Activated CD4-positive, alpha-beta T cell treated with anti-CD3 and anti-CD28 coated beads, Interleukin-2, amount 10 ng/mL, durations not matched to agents 24 days and 14 days (primary cell): ENCODE measurements at regions of chr22 and their contacts with region 1.

Region 1: DNA sequence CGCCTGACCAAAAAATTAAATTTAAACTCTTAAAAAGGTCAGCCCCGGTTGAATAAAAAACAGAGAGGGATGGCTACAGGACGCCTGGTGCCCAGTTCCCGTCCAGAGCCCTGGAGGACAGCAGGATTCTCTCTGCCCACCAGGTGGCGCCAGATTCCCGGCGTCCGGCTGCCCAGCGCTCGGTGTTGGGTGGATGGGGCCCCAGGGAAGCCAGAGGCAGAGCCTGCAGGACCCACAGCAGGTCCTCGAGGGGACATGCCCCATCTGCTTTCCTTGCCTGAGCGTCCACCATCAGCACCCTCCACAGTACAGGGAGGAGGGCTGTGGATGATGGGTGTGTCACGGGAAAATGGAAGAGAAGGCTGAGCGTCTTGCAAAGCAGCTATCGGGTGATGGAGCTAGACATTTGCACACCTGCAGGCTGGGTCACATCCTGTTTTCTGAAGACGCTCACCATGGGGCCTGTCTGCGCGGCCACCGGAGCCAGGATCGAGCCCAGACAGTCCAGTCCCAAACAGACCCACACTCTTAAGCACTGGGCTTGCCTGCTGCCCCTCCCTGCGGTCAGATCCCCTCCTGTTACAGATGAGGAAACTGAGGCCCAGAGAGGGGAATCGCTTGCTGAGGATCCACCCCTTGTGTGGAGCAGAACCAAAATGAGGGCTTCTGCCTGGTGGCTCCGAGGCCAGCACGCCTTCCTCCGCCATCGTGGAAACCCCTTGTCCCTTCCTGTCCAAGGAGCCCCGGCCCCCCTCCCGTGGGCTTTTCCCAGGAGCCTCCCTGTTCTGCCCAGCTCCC is 18.5 kb upstream of the CBX7 start:
- DNase-seq: peak; percentile 96
- H3K4me3 Mint-ChIP-seq: peak overlapping the region; percentile 70
- H3K27ac Mint-ChIP-seq: peak overlapping the region; percentile 72
- H3K4me1 Mint-ChIP-seq: peaks cover 34% of the 10 kb centered on the region
- H3K27me3 Mint-ChIP-seq: peaks cover 9% of the 10 kb centered on the region

Region 2: GRCh38 chr22:39306581-39307361 is 135.7 kb after region 1 on chr22:
- intact Hi-C with region 1: loop called (anchors 1 kb)
- DNase-seq: peak; percentile 86
- H3K4me3 Mint-ChIP-seq: no peak overlapping the region
- H3K27ac Mint-ChIP-seq: no peak overlapping the region
- H3K4me1 Mint-ChIP-seq: peaks cover 6% of the 10 kb centered on the region
- H3K27me3 Mint-ChIP-seq: no peaks in the 10 kb centered on the region